ENCODE measurements at regions of chr6 and their contacts with region 1.

Region 1: DNA sequence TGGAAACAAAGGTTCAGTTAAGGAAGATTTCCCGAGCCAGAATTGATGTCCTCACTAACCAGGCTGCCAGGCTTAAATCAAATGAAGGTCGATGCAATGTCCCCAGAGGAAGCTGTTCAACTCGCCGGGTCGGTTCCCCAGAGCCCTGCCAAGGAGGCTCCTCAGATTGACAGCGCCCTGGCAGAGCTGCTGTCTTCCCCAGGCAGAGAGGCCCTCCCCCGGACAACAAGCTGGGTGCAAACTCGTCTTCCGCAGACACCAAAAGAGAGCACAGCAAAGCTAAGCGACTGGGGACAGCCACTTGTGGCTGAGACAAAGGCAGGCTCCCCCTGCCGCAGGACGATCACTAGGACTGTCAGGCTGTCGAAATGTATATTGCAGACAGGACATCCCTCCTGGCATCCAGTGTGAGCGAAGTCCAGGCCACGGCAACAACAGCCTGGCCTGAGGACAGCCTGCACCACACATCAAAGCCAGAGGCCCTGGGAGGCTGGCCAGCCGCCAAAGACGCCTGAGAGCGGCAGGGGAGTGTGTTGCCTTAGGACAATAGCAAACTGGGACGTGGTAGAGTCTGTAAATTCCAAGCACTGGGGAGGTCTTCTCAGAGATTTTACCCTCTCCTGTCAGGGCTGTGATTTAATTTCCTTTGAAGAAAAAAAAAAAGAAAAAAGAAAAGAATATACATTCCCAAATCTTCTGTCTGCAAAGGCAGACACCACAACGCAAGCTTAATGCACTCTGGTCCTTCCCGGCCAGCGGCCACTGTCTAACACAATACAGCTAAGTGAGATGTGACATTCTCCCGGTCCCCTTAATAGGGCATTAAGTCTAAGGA is 99.1 kb downstream of the HIVEP2 start:
- DNase-seq: peak; percentile 80
- ATAC-seq: peak; percentile 52
- H3K4me3 ChIP-seq: peak overlapping the region; percentile 64
- H3K27ac ChIP-seq: peak overlapping the region; percentile 98
- H3K4me1 ChIP-seq: peaks cover 72% of the 10 kb centered on the region
- H3K27me3 ChIP-seq: no peaks in the 10 kb centered on the region
- CTCF ChIP-seq: no peak

Region 2: DNA sequence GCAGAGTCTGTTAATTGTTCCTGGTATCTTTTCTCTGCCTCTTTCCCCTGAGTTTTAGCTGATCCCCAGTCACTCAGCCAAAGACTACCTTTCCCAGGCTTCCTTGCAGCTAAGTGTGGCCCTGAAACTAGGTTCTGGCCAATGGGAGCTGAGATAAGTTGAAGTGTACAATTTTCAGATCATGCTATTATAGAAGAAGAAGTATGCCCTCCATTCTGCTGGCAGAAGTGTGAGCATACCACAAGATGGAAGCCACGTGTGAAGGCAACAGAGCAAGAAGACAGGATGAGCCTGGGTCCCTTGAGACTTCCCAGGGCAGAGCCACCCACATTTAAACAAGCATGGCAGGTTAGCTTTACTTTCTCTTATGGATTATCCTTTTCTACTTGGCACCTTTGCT is 174.1 kb before region 1 on chr6:
- CTCF ChIA-PET with region 1: no interaction called
- POLR2A ChIA-PET with region 1: no interaction called
- intact Hi-C with region 1: no loop called
- DNase-seq: no peak
- ATAC-seq: no peak
- H3K4me3 ChIP-seq: no peak overlapping the region
- H3K27ac ChIP-seq: no peak overlapping the region
- H3K4me1 ChIP-seq: no peaks in the 10 kb centered on the region
- H3K27me3 ChIP-seq: no peaks in the 10 kb centered on the region; the same call in 1 of the 2 replicates
- CTCF ChIP-seq: no peak

Region 3: DNA sequence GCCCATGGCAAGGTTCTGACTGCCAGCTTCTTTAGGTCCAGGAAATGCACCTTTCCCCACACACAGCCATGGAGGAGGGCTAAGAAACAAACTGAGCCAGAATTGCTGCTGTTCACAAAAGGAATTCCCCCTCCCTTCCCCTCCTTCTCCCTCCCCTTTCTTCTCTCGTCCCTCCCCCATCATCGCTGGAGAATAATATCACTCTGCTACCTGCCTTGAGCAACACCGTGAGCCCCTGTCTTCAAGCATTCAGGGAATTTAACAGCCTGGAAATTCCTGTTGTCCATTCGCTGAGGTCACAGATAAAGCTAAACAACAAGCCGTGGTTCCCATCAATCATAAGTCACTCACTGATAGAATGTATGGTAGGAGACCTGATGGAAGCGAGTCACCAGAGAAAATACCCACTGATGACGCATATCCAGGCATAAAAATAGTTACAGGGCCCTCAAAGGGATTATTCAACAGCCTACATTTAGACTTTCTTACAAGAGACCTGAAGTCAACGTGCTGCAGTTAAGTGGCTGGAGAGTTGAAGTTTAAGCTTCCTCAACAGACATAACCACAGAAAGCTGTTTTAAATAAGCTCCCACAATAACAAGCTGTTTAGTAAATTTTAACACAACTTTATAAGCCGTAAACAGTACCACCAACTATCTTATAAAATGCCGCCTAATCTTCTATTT is 39.5 kb after region 1 on chr6:
- CTCF ChIA-PET with region 1: no interaction called
- POLR2A ChIA-PET with region 1: interaction called, 8 read pairs
- intact Hi-C with region 1: loop called (anchors 2 kb)
- DNase-seq: peak; percentile 94
- ATAC-seq: peak; percentile 90
- H3K4me3 ChIP-seq: peak overlapping the region; percentile 26; the same call in 1 of the 2 replicates
- H3K27ac ChIP-seq: peak overlapping the region; percentile 96
- H3K4me1 ChIP-seq: peaks cover 38% of the 10 kb centered on the region
- H3K27me3 ChIP-seq: no peaks in the 10 kb centered on the region
- CTCF ChIP-seq: no peak

Region 4: GRCh38 chr6:142902636-142903053 is 56.8 kb after region 1 on chr6:
- CTCF ChIA-PET with region 1: no interaction called
- POLR2A ChIA-PET with region 1: no interaction called
- intact Hi-C with region 1: loop called (anchors 2 kb)
- DNase-seq: peak; percentile 92
- ATAC-seq: peak; percentile 92
- H3K4me3 ChIP-seq: peak overlapping the region; percentile 58; the same call in 1 of the 2 replicates
- H3K27ac ChIP-seq: peak overlapping the region; percentile 92
- H3K4me1 ChIP-seq: peaks cover 33% of the 10 kb centered on the region
- H3K27me3 ChIP-seq: no peaks in the 10 kb centered on the region
- CTCF ChIP-seq: no peak

Region 5: GRCh38 chr6:142975365-142975764 is 129.5 kb after region 1 on chr6:
- CTCF ChIA-PET with region 1: no interaction called
- POLR2A ChIA-PET with region 1: no interaction called
- intact Hi-C with region 1: no loop called
- DNase-seq: peak; percentile 5
- ATAC-seq: peak; percentile 55
- H3K4me3 ChIP-seq: no peak overlapping the region
- H3K27ac ChIP-seq: no peak overlapping the region
- H3K4me1 ChIP-seq: no peaks in the 10 kb centered on the region
- H3K27me3 ChIP-seq: no peaks in the 10 kb centered on the region
- CTCF ChIP-seq: no peak